ENCODE measurements at regions of chr4 and their contacts with region 1.

Region 1: DNA sequence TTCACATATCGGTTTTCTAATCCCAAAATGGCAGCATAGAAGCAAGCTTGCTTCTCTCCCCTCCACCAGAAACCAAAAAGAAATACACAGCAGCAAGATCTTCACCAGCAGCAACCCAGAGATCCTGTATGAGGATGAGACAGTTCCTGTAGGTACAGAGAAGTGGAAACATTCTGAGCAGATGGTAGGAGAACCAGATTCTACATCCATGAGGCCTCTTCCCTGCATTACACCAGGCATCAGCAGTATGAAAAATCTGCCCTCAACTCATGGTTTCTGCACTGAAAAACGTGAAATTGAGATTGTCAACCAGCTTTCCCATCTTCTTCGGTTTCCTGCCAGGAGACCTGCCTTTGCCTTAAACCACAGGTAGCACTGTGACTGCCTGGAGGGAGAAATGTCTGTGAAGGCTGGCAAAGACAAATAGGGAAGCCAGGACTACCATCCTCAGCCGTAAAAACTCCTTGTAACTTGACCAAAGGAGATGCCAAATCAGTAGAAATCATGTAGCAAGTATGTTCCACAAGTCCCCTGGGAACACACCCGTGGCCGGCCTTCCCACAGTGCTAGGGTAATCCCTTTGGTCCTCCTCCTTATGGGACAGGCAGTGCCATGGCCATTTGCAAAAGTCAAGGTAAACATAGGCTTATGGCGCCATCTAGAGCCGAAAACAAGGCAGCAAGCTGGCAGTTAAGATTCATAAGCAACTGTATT is 24.0 kb upstream of the MTHFD2L start:
- DNase-seq: peak in 6 of 9 experiments; percentile 16 to 62 (median 42)
- ATAC-seq: no peak
- H3K4me3 ChIP-seq: no peak overlapping the region
- H3K4me3 Mint-ChIP-seq: no peak overlapping the region
- H3K27ac ChIP-seq: no peak overlapping the region
- H3K27ac Mint-ChIP-seq: no peak overlapping the region
- H3K4me1 ChIP-seq: no peaks in the 10 kb centered on the region
- H3K4me1 Mint-ChIP-seq: no peaks in the 10 kb centered on the region
- H3K27me3 ChIP-seq: no peaks in the 10 kb centered on the region
- H3K27me3 Mint-ChIP-seq: peaks cover 2% of the 10 kb centered on the region
- CTCF ChIP-seq: peak; percentile 54

Region 2: DNA sequence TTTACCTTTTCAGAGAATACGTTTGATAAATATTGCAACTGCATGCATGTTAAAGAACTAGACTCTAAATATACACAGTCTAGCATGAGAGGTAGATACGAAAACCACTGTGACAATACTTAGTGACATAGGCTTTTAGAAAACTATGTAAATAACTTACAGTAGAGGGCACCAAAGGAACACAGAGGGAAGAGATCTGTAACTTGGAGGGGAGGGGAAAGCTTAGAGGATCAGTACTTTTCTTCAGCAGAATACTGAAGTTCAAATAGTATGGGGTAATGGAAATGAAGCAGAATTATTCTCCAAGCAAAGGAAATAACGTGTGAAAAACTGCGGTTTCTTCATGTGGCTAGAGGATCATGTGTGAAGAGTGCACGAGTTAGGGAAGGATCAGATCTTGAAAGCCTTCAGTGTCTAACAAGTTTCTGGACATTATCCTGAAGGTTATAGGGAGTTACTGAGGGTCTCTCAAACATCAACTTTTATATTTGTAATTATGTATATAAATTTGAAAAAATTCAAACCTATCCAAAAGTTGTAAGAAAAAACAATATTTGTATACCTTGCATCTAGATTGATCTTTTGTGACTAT is 1837.9 kb before region 1 on chr4:
- CTCF ChIA-PET with region 1: no interaction called
- POLR2A ChIA-PET with region 1: no interaction called
- intact Hi-C with region 1: loop called in 1 of 2 experiments (anchors 10 kb)
- DNase-seq: peak in 2 of 9 experiments; percentile 15 to 17
- ATAC-seq: no peak
- H3K4me3 ChIP-seq: no peak overlapping the region
- H3K4me3 Mint-ChIP-seq: no peak overlapping the region
- H3K27ac ChIP-seq: no peak overlapping the region
- H3K27ac Mint-ChIP-seq: no peak overlapping the region
- H3K4me1 ChIP-seq: no peaks in the 10 kb centered on the region
- H3K4me1 Mint-ChIP-seq: no peaks in the 10 kb centered on the region
- H3K27me3 ChIP-seq: no peaks in the 10 kb centered on the region
- H3K27me3 Mint-ChIP-seq: peaks cover 8% of the 10 kb centered on the region
- CTCF ChIP-seq: no peak

Region 3: DNA sequence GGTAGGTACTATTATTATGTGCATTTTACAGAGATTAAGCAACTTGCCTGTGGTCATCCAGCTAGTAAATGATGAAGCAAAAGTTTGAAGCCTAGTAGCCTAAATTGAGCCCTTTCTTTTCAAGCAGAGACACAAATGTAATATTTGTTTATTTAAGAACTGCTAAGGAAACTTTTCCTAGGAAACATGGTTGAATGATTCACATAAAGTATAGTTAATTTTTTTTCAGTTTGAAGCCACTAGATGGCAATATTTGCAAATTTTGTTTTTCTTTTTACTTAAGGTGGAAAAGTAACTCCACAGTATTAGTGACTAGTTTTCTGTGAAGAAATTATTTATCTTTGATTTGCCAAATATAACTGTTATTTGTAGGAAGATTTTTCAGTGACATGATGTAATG is 822.5 kb before region 1 on chr4:
- CTCF ChIA-PET with region 1: interaction called, 3 read pairs
- POLR2A ChIA-PET with region 1: no interaction called
- intact Hi-C with region 1: loop called in 1 of 2 experiments (anchors 10 kb)
- DNase-seq: no peak
- ATAC-seq: no peak
- H3K4me3 ChIP-seq: no peak overlapping the region
- H3K4me3 Mint-ChIP-seq: no peak overlapping the region
- H3K27ac ChIP-seq: no peak overlapping the region
- H3K27ac Mint-ChIP-seq: no peak overlapping the region
- H3K4me1 ChIP-seq: no peaks in the 10 kb centered on the region
- H3K4me1 Mint-ChIP-seq: no peaks in the 10 kb centered on the region
- H3K27me3 ChIP-seq: no peaks in the 10 kb centered on the region
- H3K27me3 Mint-ChIP-seq: no peaks in the 10 kb centered on the region
- CTCF ChIP-seq: peak; percentile 37

Region 4: GRCh38 chr4:73593631-73594241 is 540.2 kb before region 1 on chr4:
- CTCF ChIA-PET with region 1: no interaction called
- POLR2A ChIA-PET with region 1: no interaction called
- intact Hi-C with region 1: loop called in 1 of 2 experiments (anchors 5 kb)
- DNase-seq: peak in 2 of 9 experiments; percentile 2 to 20
- ATAC-seq: no peak
- H3K4me3 ChIP-seq: no peak overlapping the region
- H3K4me3 Mint-ChIP-seq: no peak overlapping the region
- H3K27ac ChIP-seq: no peak overlapping the region
- H3K27ac Mint-ChIP-seq: no peak overlapping the region
- H3K4me1 ChIP-seq: no peaks in the 10 kb centered on the region
- H3K4me1 Mint-ChIP-seq: no peaks in the 10 kb centered on the region
- H3K27me3 ChIP-seq: no peaks in the 10 kb centered on the region
- H3K27me3 Mint-ChIP-seq: no peaks in the 10 kb centered on the region
- CTCF ChIP-seq: no peak

Region 5: DNA sequence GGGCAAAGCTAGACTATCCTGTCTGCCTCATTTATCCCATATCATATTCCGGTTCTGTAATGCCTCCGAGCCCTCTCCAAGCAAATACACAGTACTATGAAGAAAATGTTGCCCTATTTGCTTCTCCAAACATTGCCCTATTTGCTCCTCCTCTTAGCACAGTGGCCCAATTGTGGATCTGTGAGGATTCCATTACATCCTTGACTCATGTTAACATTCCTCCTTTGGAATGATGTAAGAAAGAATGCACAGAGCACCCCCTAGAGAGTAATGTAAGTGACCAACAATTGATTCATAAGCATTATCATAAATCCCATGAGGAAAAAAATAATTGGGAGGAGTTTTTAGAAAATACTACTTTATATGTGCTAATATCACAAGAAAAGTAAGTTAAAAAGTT is 671.7 kb after region 1 on chr4:
- CTCF ChIA-PET with region 1: no interaction called
- POLR2A ChIA-PET with region 1: no interaction called
- intact Hi-C with region 1: no loop called
- DNase-seq: no peak
- ATAC-seq: no peak
- H3K4me3 ChIP-seq: no peak overlapping the region
- H3K4me3 Mint-ChIP-seq: no peak overlapping the region
- H3K27ac ChIP-seq: no peak overlapping the region
- H3K27ac Mint-ChIP-seq: no peak overlapping the region
- H3K4me1 ChIP-seq: no peaks in the 10 kb centered on the region
- H3K4me1 Mint-ChIP-seq: no peaks in the 10 kb centered on the region
- H3K27me3 ChIP-seq: no peaks in the 10 kb centered on the region
- H3K27me3 Mint-ChIP-seq: peaks cover 2% of the 10 kb centered on the region
- CTCF ChIP-seq: no peak

Region 6: DNA sequence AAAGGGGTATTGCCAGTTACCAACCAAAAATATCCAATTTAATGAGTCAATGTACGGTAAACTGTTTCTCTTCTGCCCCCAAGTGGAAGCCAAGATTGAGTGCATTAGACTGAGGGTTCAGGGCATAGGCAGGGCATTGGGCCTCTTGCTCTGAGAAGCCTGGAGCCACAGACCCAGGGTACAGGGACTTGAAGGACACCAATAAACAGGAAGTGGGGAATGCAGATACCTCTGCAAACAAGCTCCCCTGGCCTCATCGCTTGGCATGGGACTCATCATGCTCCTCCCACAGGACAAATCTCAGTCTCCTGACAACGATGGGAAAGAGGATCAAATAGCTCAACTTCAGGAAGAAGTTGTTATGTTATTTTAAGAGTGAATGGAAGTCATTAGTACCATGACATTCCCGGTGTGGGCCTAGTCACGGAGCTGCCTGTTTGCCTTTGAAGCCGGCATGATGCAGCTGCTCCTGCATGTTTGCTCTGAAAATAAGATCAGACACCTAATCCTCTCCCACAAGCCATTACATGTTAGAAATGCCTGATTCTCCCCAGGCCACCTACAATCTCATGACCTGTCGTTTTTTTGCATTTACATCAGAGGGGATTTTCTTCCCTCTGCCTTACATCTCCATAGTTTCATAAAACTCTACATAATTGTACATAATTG is 1156.1 kb after region 1 on chr4:
- CTCF ChIA-PET with region 1: no interaction called
- POLR2A ChIA-PET with region 1: no interaction called
- intact Hi-C with region 1: no loop called
- DNase-seq: no peak
- ATAC-seq: no peak
- H3K4me3 ChIP-seq: no peak overlapping the region
- H3K4me3 Mint-ChIP-seq: no peak overlapping the region
- H3K27ac ChIP-seq: no peak overlapping the region
- H3K27ac Mint-ChIP-seq: no peak overlapping the region
- H3K4me1 ChIP-seq: no peaks in the 10 kb centered on the region
- H3K4me1 Mint-ChIP-seq: no peaks in the 10 kb centered on the region
- H3K27me3 ChIP-seq: no peaks in the 10 kb centered on the region
- H3K27me3 Mint-ChIP-seq: no peaks in the 10 kb centered on the region
- CTCF ChIP-seq: no peak